ENCODE measurements at regions of chr14 and their contacts with region 1.

Region 1: DNA sequence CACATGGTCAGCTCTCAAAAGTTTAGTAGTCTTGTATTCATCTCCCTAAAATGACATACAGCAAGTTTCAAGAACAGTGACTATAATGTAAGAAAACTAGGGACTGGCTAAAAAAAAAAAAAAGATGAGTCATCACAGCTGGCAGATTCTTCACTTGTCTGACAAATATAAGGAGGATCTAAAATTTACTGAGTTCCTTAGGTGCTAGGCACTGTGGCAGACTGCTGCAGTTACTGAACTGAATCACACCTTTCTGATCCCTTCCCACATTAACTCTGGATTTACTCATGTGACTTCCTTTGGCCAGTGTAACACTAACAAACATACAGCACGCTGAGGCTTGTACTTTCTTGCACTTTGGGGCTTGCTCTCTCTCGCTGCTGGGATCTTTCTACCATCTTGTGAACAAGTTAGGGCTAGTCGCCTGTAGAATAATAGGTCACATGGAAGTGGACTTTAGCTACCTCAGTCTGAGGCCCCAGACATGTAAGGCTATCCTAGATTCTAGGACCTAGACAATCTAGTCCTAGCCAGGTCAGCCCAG is 32.1 kb downstream of the BAZ1A start:
- DNase-seq: peak; percentile 3
- H3K4me3 Mint-ChIP-seq: no peak overlapping the region
- H3K27ac Mint-ChIP-seq: peak overlapping the region; percentile 9
- H3K4me1 Mint-ChIP-seq: peaks cover 12% of the 10 kb centered on the region
- H3K27me3 Mint-ChIP-seq: no peaks in the 10 kb centered on the region

Region 2: DNA sequence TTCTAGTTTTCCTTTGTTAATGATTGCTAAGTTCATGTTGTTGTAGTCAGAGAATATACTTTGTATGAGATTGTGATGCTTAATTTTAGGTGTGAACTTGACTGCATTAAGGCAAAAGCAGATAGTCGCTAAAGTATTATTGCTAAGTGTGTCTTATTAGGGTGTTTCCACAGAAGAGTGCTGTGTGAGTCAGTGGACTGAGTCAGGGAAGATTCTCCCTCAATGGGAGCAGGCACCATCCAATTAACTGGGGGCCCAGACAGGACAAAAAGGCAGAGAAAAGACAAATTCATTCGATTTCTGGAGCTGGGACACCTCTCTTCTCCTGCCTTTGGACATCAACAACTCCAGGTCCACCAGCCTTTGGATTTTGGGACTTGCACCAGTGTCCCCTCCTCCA is 16.4 kb before region 1 on chr14:
- intact Hi-C with region 1: no loop called
- DNase-seq: no peak
- H3K4me3 Mint-ChIP-seq: no peak overlapping the region
- H3K27ac Mint-ChIP-seq: no peak overlapping the region
- H3K4me1 Mint-ChIP-seq: peaks cover 19% of the 10 kb centered on the region
- H3K27me3 Mint-ChIP-seq: no peaks in the 10 kb centered on the region

Region 3: DNA sequence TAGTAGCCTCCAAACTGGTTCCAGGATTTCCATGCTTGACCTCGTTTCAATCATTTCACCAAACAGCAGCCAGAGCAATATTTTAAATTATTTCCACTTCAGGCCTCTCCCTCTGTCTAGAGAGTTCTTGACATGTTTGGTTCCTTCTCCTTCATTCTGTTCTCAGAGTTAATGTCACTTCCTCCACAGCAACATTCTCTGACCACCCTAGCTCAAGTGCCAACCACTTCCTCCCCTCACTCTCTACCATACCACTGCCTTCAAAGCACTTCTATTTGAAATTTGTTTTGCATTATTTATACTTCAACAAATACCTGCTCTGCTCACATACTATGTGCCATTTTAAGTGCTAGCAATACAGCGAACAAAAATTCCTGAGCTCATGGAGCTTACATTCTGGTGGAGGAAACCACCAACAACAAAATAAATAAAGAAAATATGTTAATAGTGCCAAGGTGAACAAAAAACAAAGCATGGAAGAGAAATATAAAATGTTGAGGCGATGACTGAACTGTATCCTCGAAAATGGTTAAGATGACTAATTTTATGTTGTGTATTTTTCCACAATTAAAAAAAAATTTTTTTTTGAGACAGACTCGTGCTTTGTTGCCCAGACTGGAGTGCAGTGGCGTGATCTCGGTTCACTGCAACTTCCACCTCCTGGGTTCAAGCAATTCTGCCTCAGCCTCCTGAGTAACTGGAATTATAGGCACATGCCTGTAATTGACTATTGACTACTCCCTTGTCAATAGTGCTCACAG is 14.8 kb after region 1 on chr14:
- intact Hi-C with region 1: loop called (anchors 1 kb)
- DNase-seq: peak; percentile 16
- H3K4me3 Mint-ChIP-seq: peak overlapping the region; percentile 28
- H3K27ac Mint-ChIP-seq: peak overlapping the region; percentile 81
- H3K4me1 Mint-ChIP-seq: peaks cover 34% of the 10 kb centered on the region
- H3K27me3 Mint-ChIP-seq: no peaks in the 10 kb centered on the region

Region 4: DNA sequence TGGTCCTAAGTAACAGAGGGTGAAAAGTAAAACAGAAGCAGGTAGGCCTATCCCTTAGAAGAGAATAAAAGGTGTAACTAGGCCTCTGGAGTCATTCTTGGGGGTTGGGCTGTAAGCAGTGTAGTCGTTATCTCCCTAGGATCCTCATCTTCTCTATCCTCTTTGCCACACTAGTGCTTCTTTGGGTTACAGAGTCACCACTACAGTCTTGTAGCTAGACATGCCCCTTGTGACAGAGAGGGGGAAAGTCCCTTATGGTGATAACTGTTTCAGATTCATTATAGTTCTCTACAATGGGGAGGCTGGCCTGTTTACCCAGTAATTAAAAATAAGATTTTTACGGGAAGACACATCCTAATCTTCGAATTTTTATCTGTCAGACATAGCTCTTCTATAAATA is 123.3 kb after region 1 on chr14:
- intact Hi-C with region 1: no loop called
- DNase-seq: no peak
- H3K4me3 Mint-ChIP-seq: no peak overlapping the region
- H3K27ac Mint-ChIP-seq: peak overlapping the region; percentile 62
- H3K4me1 Mint-ChIP-seq: peaks cover 14% of the 10 kb centered on the region
- H3K27me3 Mint-ChIP-seq: no peaks in the 10 kb centered on the region

Region 5: DNA sequence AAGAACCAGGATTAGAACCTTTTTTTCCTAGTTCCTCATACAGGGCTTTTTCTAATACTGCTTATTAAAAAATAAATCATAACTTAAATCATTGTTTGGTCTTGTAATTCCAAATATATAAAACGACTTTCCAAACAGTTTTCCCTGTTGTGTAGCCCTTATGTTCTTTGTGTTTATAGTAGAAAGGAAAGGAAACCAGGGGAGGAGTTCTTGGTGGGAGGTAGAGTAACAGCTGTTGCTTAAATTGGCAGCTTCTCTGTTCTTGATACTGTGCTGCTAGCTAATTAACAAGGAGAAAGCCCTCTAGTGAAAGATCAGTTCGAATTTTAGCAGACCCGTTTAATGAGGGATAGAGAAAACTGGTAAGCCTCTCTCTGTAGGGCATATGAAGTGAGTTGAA is 154.7 kb after region 1 on chr14:
- intact Hi-C with region 1: no loop called
- DNase-seq: no peak
- H3K4me3 Mint-ChIP-seq: no peak overlapping the region
- H3K27ac Mint-ChIP-seq: no peak overlapping the region
- H3K4me1 Mint-ChIP-seq: peaks cover 6% of the 10 kb centered on the region
- H3K27me3 Mint-ChIP-seq: no peaks in the 10 kb centered on the region

Region 6: DNA sequence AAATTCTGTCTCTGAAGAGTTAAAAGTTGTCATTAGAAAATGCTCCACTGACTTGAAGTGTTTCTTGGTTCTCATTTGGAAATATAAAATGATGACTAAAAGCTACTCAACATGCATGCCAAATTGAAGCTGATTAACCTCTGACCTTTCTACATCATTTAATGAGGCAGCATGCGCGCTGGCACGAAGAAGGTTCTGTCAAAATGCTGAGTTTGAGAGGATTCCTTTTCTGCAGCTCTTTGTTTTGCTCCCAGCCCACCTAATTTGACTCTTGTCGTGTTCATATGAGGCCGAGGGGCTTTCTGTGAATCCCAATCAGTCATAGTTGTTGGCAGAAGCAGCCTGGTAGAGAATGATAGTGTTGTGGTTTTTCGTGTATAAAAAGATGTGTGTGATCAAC is 1136.4 kb after region 1 on chr14:
- intact Hi-C with region 1: no loop called
- DNase-seq: no peak
- H3K4me3 Mint-ChIP-seq: no peak overlapping the region
- H3K27ac Mint-ChIP-seq: no peak overlapping the region
- H3K4me1 Mint-ChIP-seq: no peaks in the 10 kb centered on the region
- H3K27me3 Mint-ChIP-seq: no peaks in the 10 kb centered on the region

Measured in activated T-helper 1 cell treated with anti-CD3 and anti-CD28 coated beads, Interleukin-12 subunit alpha, Interleukin-12 subunit beta, Interleukin-2, Interleukin-4 antibody, amounts not matched to agents 30 ng/mL and 10 ng/mL and 1 ng/mL, durations not matched to agents 14 hours and 24 hours and 36 hours (primary cell).